AG04450 (cell line): ENCODE measurements at regions of chr11 and their contacts with region 1.

Region 1: GRCh38 chr11:125091247-125091876 is 20.1 kb downstream of the TMEM218 start:
- DNase-seq: peak; percentile 58
- H3K4me3 ChIP-seq: no peak overlapping the region
- H3K27ac ChIP-seq: peak overlapping the region; percentile 52
- H3K27me3 ChIP-seq: no peaks in the 10 kb centered on the region
- CTCF ChIP-seq: peak; percentile 80

Region 2: GRCh38 chr11:124101737-124102136 is 989.6 kb before region 1 on chr11:
- CTCF ChIA-PET with region 1: no interaction called
- POLR2A ChIA-PET with region 1: no interaction called
- DNase-seq: no peak
- H3K4me3 ChIP-seq: no peak overlapping the region
- H3K27ac ChIP-seq: no peak overlapping the region
- H3K27me3 ChIP-seq: peaks cover 9% of the 10 kb centered on the region
- CTCF ChIP-seq: no peak

Region 3: DNA sequence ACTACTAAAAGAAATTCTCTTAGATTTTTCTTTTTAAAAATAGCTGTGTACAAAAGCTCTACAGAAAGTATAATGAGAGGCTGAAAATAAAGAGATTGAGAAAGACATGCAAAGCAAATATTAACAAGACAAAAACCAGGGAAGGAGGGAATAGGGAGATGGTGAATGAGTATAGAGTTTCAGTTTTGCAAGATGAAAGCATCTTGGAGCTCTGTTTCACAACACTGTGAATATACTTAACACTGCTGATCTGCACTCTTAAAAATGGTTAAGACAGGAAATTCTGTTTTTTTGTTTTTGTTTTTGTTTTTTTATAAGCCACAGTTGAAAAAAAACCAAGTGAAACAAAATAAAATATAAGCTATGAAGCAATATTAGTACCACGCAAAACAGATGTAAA is 14.6 kb after region 1 on chr11:
- CTCF ChIA-PET with region 1: interaction called, 19 read pairs
- POLR2A ChIA-PET with region 1: no interaction called
- DNase-seq: no peak
- H3K4me3 ChIP-seq: no peak overlapping the region
- H3K27ac ChIP-seq: no peak overlapping the region
- H3K27me3 ChIP-seq: no peaks in the 10 kb centered on the region
- CTCF ChIP-seq: no peak

Region 4: GRCh38 chr11:125132596-125132995 is 41.2 kb after region 1 on chr11:
- CTCF ChIA-PET with region 1: interaction called, 10 read pairs
- POLR2A ChIA-PET with region 1: no interaction called
- DNase-seq: no peak
- H3K4me3 ChIP-seq: no peak overlapping the region
- H3K27ac ChIP-seq: no peak overlapping the region
- H3K27me3 ChIP-seq: no peaks in the 10 kb centered on the region
- CTCF ChIP-seq: no peak

Region 5: DNA sequence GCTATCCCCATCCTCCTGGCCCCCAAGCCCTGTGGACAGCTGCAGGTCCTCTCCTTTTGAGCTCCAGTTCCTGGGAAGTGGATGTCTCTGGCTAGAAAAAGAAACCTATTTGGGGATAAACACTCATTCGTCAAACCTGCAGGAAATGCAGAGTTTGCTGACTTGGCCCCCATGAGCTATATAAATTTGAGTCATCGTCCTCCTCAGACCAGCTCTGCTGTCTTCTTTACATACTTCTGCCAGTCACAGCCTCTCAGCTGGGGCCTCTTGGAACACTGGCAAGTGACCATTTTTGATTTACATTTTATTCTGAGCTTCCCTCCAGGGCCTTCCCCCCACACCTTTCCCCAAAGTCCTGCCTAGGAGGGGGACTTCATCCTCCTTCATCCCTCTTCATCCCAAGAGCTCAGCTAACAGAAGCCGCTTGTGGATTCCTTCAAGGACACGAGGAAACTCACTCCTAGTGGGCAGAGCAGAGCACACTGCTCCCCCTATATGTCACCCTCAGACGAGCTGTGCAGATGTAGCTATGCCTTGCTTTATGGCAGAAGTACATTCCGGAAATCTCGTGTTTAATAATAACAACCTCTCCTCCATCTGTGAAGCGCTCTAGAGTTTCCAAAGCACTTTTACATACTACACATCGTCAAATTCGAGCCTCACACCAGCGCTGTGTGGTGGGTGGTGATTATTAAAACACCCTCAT is 272.9 kb after region 1 on chr11:
- CTCF ChIA-PET with region 1: interaction called, 15 read pairs
- POLR2A ChIA-PET with region 1: no interaction called
- DNase-seq: no peak
- H3K4me3 ChIP-seq: no peak overlapping the region
- H3K27ac ChIP-seq: peak overlapping the region; percentile 22
- H3K27me3 ChIP-seq: no peaks in the 10 kb centered on the region
- CTCF ChIP-seq: peak; percentile 51

Region 6: DNA sequence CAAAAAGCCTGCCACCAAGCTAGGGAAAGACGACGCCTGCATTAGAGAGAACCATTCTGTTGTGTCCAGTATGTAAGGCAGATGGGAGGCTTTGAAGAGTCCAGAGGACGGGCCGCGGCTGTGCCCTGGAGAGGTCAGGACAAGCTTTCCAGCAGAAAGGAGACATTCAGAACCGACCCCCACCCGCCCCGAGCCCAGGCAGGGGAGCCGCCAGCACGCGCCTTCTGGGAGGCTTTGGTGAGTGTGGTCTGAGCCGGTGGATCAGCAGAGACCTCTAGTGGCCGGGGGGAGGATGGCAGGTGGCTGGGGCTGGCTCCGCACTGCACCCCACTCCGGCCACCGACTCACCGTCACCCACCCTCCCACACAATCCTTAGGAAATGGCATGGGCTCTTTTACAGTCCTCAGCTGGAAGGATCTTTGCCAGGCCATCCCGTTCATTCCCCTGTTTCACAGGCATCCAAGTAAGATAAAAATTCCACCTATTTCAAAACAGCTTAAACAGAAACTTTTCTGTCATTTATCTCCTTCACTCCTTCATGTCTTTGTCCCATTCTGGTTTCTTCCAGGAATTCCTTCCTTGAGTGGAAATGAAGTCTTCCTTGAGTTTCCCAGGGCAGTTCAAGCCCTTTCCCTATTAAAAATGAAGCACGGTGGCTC is 313.5 kb after region 1 on chr11:
- CTCF ChIA-PET with region 1: interaction called, 89 read pairs
- POLR2A ChIA-PET with region 1: no interaction called
- DNase-seq: no peak
- H3K4me3 ChIP-seq: no peak overlapping the region
- H3K27ac ChIP-seq: no peak overlapping the region
- H3K27me3 ChIP-seq: peaks cover 22% of the 10 kb centered on the region
- CTCF ChIP-seq: peak; percentile 95